ENCODE measurements at regions of chr14 and their contacts with region 1.

Region 1: DNA sequence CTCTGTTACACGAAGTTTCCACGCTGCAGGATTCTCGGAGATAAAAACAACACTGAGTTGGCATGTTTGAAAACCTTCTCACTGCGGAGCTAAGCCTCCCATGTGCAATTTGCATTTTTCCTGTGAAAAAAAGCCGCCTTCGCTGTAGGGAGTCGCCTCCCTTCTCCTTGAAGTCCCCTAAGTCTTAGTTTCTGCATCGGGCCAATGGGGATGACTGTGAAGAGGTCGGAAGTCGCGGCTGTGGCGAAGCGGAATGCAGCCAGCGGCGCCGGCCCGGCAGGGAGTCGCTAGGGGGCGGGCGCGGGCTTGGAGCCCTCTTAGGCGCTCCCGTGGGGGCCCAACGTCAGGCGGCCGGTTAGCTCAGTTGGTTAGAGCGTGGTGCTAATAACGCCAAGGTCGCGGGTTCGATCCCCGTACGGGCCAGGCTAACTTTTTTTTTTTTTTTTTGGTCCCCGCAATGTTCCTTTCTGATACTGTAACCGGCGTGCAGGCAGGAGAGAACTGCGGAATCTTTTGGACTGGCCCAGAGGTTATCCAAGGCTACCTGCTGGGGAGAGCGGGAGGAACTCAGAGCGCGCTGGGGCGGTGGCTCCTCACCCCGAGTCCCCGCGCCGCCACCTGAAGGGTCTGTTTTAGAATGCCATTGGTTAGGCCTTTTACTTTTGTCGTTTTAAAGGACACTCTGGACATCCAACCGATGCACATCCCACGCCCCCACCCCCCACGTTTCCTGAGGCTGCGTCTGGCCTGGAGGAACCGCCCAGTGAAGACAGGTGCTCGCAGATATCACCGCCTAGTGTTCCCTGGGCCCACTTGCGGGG is 2.6 kb upstream of the ZNF839 start:
- DNase-seq: peak; percentile 89
- ATAC-seq: peak; percentile 45 to 52
- H3K4me3 ChIP-seq: peak overlapping the region; percentile 51 to 66 (median 63)
- H3K27ac ChIP-seq: peak overlapping the region; percentile 92 to 99 (median 97)
- H3K4me1 ChIP-seq: peaks cover 50 to 51% of the 10 kb centered on the region in 2 donors
- H3K27me3 ChIP-seq: no peaks in the 10 kb centered on the region
- CTCF ChIP-seq: peak; percentile 78 to 87 (median 85)
- POLR2A ChIP-seq: no peak

Region 2: GRCh38 chr14:102046343-102047278 is 270.3 kb before region 1 on chr14:
- in situ Hi-C with region 1: loop called in 1 of 4 experiments (anchors 10 kb)
- intact Hi-C with region 1: loop called (anchors 2 kb)
- DNase-seq: peak; percentile 79 to 93
- ATAC-seq: peak; percentile 54 to 87
- H3K4me3 ChIP-seq: no peak overlapping the region
- H3K27ac ChIP-seq: peak overlapping the region; percentile 58 to 77 (median 70)
- H3K4me1 ChIP-seq: peaks cover 36% of the 10 kb centered on the region in 2 donors
- H3K27me3 ChIP-seq: no peaks in the 10 kb centered on the region
- CTCF ChIP-seq: peak; percentile 43 to 69 (median 56)
- POLR2A ChIP-seq: no peak

Region 3: DNA sequence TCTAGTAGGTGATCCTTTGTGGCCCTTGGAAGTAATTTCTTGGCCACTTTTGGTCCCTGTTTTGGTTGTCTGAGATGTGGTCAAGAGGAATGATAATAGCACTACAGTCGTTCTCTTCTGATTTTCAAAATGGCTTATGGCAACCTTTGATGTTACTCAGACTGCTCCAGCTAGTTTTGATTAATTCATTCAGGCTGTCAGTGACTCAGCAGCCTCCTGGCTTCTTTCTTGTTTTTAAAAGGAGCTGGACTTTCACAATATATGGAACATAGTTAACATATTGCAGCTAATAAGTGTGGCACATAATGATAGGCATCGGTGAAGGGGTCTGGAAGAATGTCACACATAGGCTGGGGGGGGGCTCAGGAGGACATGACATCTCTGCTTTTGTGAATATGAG is 129.9 kb before region 1 on chr14:
- in situ Hi-C with region 1: no loop called
- intact Hi-C with region 1: loop called (anchors 5 kb)
- DNase-seq: no peak
- ATAC-seq: peak; percentile 64 to 70
- H3K4me3 ChIP-seq: no peak overlapping the region
- H3K27ac ChIP-seq: peak overlapping the region in 2 of 4 donors; percentile 39 to 50
- H3K4me1 ChIP-seq: peaks cover 54 to 61% of the 10 kb centered on the region in 2 donors
- H3K27me3 ChIP-seq: no peaks in the 10 kb centered on the region
- CTCF ChIP-seq: no peak
- POLR2A ChIP-seq: no peak

Region 4: DNA sequence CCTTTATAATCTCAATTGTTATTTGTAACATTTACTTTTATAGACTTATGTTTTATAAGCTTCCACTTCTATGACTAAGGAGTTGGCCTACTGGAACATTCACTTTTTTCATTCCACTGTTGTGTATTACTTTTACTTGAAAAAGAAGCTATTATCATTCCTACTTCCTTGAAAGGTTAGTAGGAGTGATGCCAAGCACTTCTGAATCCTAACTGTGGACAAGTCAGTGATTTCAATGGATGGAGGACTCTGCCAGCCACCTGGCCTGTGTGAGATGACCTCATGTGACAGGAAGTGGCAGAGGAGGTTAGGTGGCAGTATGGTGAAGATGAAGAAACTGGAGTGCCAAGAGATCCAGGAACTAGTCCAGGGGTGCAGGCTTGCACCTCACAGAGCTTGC is 91.8 kb after region 1 on chr14:
- in situ Hi-C with region 1: no loop called
- intact Hi-C with region 1: loop called (anchors 5 kb)
- DNase-seq: peak; percentile 52 to 77
- ATAC-seq: peak; percentile 59 to 67
- H3K4me3 ChIP-seq: no peak overlapping the region
- H3K27ac ChIP-seq: peak overlapping the region; percentile 86 to 96 (median 90)
- H3K4me1 ChIP-seq: peaks cover 32 to 42% of the 10 kb centered on the region in 2 donors
- H3K27me3 ChIP-seq: no peaks in the 10 kb centered on the region
- CTCF ChIP-seq: no peak
- POLR2A ChIP-seq: no peak

Region 5: GRCh38 chr14:102591889-102592763 is 275.2 kb after region 1 on chr14 and contains the start of gene RCOR1:
- in situ Hi-C with region 1: no loop called
- intact Hi-C with region 1: loop called (anchors 2 kb)
- DNase-seq: peak; percentile 95 to 97
- ATAC-seq: peak; percentile 82 to 87
- H3K4me3 ChIP-seq: peak within 1 kb of the TSS; percentile 81 to 100 (median 92)
- H3K27ac ChIP-seq: peak within 1 kb of the TSS; percentile 92 to 100 (median 96)
- H3K4me1 ChIP-seq: peaks cover 24 to 30% of the 10 kb centered on the region in 2 donors
- H3K27me3 ChIP-seq: no peaks in the 10 kb centered on the region
- CTCF ChIP-seq: no peak
- POLR2A ChIP-seq: peak; percentile 69 to 80
- total RNA-seq, gene RCOR1: 10.0 to 14.2 (median 12.1) TPM

Region 6: DNA sequence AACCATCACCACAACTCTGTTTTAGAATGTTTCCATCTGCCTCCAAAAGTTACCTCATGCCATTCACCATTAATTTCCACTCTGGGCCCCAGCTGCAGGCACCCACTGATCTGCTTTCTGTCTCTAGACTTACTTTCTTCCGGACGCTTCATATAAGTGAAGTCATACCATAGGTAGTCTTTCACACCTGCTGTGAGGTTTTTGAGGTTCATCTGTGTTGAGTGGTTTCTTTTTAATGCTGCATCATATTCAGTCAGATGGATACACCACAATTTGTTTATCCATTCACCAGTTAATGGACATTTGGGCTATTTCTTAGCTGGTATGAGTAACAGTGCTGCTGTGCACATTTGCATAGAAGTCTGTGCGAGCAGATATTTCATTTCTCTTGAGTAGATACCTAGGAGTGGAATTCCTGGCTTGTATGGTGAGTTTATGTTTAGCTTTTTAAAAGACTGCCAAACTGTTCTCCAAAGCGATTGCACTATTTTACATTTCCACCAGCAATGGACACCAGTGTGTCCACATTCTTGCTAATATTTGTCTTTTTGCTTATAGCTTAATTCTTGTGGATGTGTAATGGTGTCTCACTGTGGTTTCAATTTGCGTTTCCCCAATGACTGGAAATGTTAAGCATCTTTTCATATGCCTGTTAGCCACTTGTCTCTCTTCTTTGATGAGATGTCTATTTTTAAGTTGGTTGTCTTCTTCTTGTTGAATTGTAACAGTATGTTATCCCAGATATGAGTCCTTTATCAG is 1447.0 kb after region 1 on chr14:
- in situ Hi-C with region 1: no loop called
- intact Hi-C with region 1: no loop called
- DNase-seq: no peak
- ATAC-seq: no peak
- H3K4me3 ChIP-seq: no peak overlapping the region
- H3K27ac ChIP-seq: no peak overlapping the region
- H3K4me1 ChIP-seq: no peaks in the 10 kb centered on the region
- H3K27me3 ChIP-seq: no peaks in the 10 kb centered on the region
- CTCF ChIP-seq: no peak
- POLR2A ChIP-seq: no peak

Measured in gastrocnemius medialis (tissue), 4 donors.